Left cardiac atrium (tissue), 4 donors: ENCODE measurements at regions of chr3 and their contacts with region 1.

Region 1: GRCh38 chr3:157159762-157160657 is at the start of gene CCNL1:
- DNase-seq: peak; percentile 98
- ATAC-seq: peak; percentile 94
- total RNA-seq, gene CCNL1: 44.9 to 64.2 TPM

Region 2: DNA sequence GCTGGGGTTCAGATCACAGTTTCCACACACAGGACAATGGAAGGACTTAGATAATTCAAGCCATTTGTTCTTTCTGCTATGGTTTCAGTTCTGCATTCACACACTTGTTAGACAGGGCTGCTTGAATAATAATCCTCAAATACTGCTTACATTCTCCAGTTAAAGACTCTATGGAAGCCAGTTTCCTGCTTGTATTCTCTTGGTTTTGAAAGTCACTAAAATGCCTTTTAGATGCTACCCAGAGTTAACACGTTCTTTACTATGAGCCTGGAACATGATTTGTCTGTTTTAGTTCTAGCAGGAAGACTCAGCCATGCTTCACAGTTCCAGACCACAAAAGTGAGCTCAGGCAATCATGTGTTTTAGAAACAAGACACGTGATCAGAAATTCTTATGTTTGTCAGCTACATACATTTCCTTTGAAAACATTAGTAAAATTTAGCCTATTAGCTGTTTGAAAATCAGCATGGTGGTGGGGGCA is 181.5 kb before region 1 on chr3:
- intact Hi-C with region 1: no loop called
- DNase-seq: no peak
- ATAC-seq: no peak

Region 3: GRCh38 chr3:157088601-157089454 is 71.2 kb before region 1 on chr3:
- intact Hi-C with region 1: no loop called
- DNase-seq: peak; percentile 96
- ATAC-seq: peak; percentile 87 to 88

Region 4: DNA sequence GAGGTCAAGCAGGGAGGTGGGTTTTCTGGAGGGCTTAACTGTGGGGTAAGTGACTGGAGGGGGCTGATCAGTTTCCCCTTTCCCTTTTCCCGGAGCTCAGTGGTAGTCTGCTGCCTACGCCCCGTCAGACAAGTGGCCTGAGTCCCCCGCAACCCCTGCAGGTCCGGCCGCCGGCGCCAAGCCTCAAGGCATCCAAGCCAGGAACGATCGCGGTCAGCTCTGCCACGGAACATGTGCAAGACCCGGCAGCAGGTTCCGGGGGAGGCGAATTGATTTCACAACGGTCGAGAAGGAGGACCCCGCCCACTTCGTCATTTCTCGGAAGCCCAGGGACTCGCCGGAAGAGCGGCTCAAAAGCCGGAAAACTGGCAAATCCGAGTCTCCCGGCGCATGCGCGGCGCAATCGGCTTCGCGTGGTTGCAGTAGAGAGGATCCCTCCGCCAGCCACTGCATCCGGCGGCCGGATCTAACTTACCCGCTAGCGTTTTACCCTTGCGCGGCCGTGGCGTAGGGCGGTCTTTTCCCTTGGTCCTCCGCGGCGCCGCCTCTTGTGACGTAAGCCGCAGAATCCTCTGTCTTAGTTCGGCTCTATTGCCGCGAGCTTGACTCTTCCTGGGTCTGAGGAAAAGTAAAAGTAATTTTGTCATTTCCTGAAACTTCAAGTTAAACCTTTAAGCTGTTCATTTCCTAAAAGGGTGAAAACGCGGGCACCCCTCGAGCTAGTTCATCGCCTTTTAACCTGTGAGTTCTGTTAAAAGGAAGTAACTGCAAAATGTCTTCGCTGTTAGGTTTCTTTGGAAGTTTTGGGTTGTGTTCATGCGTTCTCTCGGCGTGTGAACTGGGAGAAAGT is 14.9 kb after region 1 on chr3:
- intact Hi-C with region 1: loop called in 1 of 2 experiments (anchors 1 kb)
- DNase-seq: peak; percentile 100
- ATAC-seq: peak; percentile 97